ENCODE measurements at regions of chr1 and their contacts with region 1.

Region 1: DNA sequence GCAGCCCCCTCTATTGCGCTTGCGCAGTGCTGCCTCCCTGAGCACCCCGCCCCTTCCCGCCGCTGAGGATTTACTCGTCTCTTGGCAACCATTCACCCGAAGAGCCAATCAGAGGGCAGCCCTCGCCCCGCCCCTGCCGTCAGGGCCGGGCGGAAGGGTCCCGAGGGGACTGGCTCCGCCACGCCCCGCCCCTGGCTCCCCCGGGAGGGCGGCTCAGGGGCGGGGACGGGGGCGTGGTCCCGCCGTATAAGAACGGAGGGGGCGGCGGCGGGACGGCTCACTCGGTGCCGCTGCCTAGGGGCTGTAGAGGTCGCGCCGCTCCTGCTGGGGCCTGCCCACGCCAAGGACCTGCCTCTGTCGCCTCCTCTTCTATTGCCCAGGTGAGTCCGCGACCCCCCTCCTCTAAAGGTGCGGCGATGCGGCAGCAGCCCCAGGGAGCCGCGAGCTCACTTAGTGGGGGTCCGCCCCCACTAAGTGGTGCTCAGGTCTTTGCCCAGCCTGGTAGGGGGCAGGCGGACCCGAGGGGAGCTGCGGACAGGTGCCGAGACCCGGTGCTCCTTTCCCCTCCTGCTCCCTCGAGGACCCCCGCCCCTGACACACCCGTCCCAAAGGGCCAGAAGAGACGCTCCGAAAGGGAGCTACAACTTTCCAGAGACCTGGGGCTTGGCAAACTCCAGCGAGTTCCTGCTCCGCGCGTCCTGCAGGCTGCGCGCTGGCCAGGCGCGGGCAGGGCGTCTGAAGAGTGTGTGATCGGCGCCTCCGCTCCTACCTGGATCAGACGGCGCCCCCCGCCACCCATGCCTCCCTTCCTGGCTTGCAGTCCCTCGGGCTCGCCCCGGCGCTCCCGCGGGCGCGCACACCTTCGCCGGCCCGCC is at the start of gene TENT5C:
- DNase-seq: peak; percentile 97 to 99 (median 99)
- ATAC-seq: peak; percentile 97 to 99
- H3K4me3 ChIP-seq: peak within 1 kb of the TSS; percentile 72
- H3K27ac ChIP-seq: peak within 1 kb of the TSS; percentile 76
- H3K4me1 ChIP-seq: peaks cover 8% of the 10 kb centered on the region
- H3K27me3 ChIP-seq: no peaks in the 10 kb centered on the region
- total RNA-seq, gene TENT5C: 20.4 to 33.1 (median 31.7) TPM

Region 2: DNA sequence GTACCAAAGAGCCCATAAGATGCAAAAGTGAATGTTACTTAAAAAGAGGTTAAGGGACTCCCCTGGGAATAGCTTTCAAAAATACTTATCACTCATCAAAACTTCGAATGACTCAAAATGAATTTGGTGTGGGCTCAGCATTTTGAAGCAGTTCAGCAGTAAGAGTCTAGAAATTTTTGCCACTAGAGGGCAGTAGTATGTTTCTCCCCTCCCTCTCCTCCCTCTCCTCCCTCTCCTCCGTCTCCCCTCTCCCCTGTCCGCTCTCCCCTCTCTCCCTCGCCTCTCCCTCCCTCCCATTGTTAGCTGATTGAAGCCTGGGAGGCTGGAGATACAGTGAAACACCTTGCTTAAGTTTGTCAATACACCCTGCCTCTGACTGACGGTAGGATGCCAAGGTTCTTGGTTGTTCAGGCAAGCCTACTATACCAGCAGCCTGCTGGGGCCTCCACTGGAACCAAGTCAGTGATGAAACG is 71.0 kb before region 1 on chr1:
- intact Hi-C with region 1: loop called in 1 of 4 experiments (anchors 10 kb)
- DNase-seq: no peak
- ATAC-seq: peak; percentile 89 to 91
- H3K4me3 ChIP-seq: no peak overlapping the region
- H3K27ac ChIP-seq: no peak overlapping the region
- H3K4me1 ChIP-seq: no peaks in the 10 kb centered on the region
- H3K27me3 ChIP-seq: no peaks in the 10 kb centered on the region

Region 3: GRCh38 chr1:117732065-117732797 is 126.2 kb after region 1 on chr1:
- intact Hi-C with region 1: no loop called
- DNase-seq: no peak
- ATAC-seq: no peak
- H3K4me3 ChIP-seq: no peak overlapping the region
- H3K27ac ChIP-seq: no peak overlapping the region
- H3K4me1 ChIP-seq: peaks cover 2% of the 10 kb centered on the region
- H3K27me3 ChIP-seq: no peaks in the 10 kb centered on the region